Heart right ventricle (tissue), 16 donors: ENCODE measurements at regions of chr1 and their contacts with region 1.

Region 1: GRCh38 chr1:27044613-27045151 is 32.0 kb upstream of the TENT5B start:
- DNase-seq: peak; percentile 90 to 92
- ATAC-seq: peak; percentile 86 to 97 (median 92)
- H3K4me3 ChIP-seq: peak overlapping the region in 8 of 10 donors; percentile 3 to 39 (median 32)
- H3K27ac ChIP-seq: peak overlapping the region in 7 of 10 donors; percentile 6 to 61 (median 24)
- H3K4me1 ChIP-seq: peaks cover 0 to 34% (median 18%) of the 10 kb centered on the region in 9 donors
- H3K27me3 ChIP-seq: peaks cover 0 to 5% (median 0%) of the 10 kb centered on the region in 7 donors
- CTCF ChIP-seq: peak; percentile 96 to 100 (median 99)

Region 2: DNA sequence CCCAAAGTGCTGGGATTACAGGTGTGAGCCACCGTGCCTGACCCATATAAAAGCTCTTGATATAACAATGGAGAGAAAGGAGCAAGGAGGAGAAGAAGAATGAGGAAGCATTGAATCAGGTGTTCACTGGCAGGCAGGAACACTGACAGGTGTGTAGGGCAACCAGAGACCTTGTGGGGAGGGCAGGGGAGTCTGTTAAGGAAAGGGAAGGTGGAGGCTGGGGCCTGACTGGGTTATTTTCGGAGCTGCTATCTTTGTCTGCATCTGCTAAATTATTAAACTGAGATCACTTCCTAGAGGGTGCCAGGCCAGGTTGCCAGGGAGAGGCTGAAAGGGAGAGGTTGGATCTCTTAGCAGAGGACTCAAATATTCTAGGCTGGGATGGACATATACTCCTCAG is 58.0 kb before region 1 on chr1:
- intact Hi-C with region 1: no loop called
- DNase-seq: no peak
- ATAC-seq: no peak
- H3K4me3 ChIP-seq: no peak overlapping the region
- H3K27ac ChIP-seq: no peak overlapping the region
- H3K4me1 ChIP-seq: peaks cover 0 to 9% (median 0%) of the 10 kb centered on the region in 9 donors
- H3K27me3 ChIP-seq: peaks cover 0 to 45% (median 13%) of the 10 kb centered on the region in 7 donors
- CTCF ChIP-seq: no peak

Region 3: DNA sequence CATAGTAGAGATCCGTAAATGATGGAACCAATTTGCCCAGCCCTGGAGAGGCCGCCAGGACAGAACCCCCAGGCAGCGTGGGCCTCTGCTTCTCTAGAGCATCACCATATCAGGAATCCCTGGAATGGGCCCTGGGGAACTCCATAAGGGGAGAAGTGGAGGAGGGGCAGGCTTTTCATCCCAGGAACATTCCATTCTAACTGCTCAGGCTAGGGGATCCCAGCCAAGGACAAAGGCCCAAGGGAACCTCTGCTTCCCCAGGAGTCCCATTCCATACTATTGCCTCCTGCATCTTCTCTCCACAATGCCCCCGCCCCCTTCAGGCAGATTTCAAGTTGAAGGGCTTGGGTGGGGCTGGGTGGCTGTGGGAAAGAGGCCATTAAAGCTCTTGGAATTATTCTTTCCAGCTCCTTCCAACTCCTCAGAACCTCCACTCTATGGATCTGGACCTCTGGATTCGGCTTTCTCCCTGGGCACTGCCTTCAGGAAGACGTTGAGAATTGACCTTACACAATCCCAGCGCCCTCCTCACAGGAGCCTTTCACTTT is 45.2 kb before region 1 on chr1:
- intact Hi-C with region 1: loop called in 8 of 10 experiments (anchors 1 to 5 kb)
- DNase-seq: peak; percentile 66 to 78
- ATAC-seq: peak; percentile 48 to 87 (median 78)
- H3K4me3 ChIP-seq: no peak overlapping the region
- H3K27ac ChIP-seq: peak overlapping the region; percentile 58 to 87 (median 76)
- H3K4me1 ChIP-seq: peaks cover 37 to 75% (median 62%) of the 10 kb centered on the region in 9 donors
- H3K27me3 ChIP-seq: peaks cover 0 to 29% (median 20%) of the 10 kb centered on the region in 7 donors
- CTCF ChIP-seq: no peak

Region 4: DNA sequence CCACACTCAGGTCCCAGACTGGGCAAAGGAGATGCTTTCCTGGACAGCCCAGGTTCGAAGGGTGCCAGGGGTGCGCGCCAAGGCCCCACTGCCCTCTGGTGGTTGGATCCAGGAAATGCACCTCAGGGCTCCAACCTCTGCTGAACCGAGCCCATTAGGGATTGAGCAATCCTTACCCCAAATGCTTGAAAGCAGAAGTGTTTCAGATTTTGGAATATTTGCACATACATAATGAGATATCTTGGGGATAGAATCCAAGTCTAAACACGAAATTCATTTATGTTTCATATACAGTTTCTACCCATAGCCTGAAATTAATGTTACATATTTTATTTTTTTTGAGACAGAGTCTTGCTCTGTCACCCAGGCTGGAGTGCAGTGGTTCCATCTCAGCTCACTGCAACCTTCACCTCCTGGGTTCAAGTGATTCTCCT is 52.8 kb after region 1 on chr1:
- intact Hi-C with region 1: loop called (anchors 1 to 2 kb)
- DNase-seq: peak; percentile 74 to 77
- ATAC-seq: peak; percentile 56 to 73 (median 63)
- H3K4me3 ChIP-seq: no peak overlapping the region
- H3K27ac ChIP-seq: peak overlapping the region in 2 of 10 donors; percentile 71 to 80
- H3K4me1 ChIP-seq: peaks cover 14 to 39% (median 35%) of the 10 kb centered on the region in 9 donors
- H3K27me3 ChIP-seq: no peaks in the 10 kb centered on the region
- CTCF ChIP-seq: peak; percentile 96 to 99 (median 97)

Region 5: GRCh38 chr1:27192039-27192529 is 147.4 kb after region 1 on chr1:
- intact Hi-C with region 1: loop called in 1 of 10 experiments (anchors 10 kb)
- DNase-seq: no peak
- ATAC-seq: no peak
- H3K4me3 ChIP-seq: no peak overlapping the region
- H3K27ac ChIP-seq: no peak overlapping the region
- H3K4me1 ChIP-seq: peaks cover 0 to 11% (median 0%) of the 10 kb centered on the region in 9 donors
- H3K27me3 ChIP-seq: peaks cover 0 to 5% (median 0%) of the 10 kb centered on the region in 7 donors
- CTCF ChIP-seq: no peak

Region 6: DNA sequence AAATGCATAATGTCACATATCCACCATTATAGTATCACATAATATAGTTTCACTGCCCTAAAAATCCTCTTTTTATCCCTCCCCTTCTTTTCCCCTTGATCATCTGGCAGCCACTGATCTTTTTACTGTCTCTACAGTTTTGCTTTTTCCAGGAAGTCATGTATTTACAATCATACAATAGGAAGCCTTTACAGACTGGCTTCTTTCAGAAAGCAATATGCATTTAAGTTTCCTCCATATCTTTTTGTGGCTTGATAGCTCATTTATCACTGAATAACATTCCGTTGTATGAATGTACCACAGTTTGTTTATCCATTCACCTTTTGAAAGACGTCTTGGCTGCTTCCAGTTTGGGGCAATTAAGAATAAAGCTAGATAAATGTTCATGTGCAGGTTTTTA is 175.4 kb after region 1 on chr1:
- intact Hi-C with region 1: loop called in 1 of 10 experiments (anchors 10 kb)
- DNase-seq: no peak
- ATAC-seq: no peak
- H3K4me3 ChIP-seq: no peak overlapping the region
- H3K27ac ChIP-seq: no peak overlapping the region
- H3K4me1 ChIP-seq: no peaks in the 10 kb centered on the region
- H3K27me3 ChIP-seq: no peaks in the 10 kb centered on the region
- CTCF ChIP-seq: no peak